ENCODE measurements at regions of chr9 and their contacts with region 1.

Region 1: DNA sequence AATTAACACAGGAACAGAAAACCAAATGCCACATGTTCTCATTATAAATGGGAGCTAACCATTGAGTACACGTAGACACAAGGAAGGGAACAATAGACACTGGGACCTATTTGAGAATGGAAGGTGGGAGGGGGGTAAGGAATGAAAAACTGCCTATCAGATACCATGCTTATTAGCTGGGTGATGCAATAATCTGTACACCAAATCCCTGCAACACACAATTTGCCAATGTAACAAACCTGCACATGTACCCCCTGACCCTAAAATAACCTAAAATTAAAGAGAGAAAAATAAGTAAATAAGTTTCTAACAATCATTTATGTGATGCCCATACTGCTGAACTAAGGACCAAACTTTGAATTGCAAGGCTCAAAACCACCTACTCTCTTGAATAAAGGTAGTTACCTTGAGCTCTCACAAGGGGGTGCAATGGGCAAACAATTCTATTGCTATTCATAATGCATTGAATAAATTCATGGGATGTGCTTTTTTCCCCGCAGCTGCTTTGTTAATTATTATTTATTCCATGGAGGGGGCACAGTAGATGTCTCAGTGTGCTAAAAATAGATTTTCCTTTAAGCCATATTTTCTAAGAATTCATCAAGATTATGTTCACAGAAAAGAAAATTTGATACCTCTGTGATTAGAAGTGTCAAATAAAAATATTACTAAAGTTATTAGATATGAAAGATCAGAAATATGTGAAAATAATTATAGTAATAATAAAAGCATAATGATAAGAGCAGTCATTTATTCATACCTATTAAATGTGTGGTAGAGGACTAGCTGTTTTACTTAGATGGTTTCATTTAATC is 76.2 kb upstream of the PTPN3 start:
- DNase-seq: peak; percentile 19 to 64 (median 55)
- H3K4me3 ChIP-seq: no peak overlapping the region
- H3K27ac ChIP-seq: no peak overlapping the region
- H3K4me1 ChIP-seq: no peaks in the 10 kb centered on the region
- H3K27me3 ChIP-seq: no peaks in the 10 kb centered on the region
- CTCF ChIP-seq: peak; percentile 49 to 81 (median 74)
- POLR2A ChIP-seq: no peak

Region 2: DNA sequence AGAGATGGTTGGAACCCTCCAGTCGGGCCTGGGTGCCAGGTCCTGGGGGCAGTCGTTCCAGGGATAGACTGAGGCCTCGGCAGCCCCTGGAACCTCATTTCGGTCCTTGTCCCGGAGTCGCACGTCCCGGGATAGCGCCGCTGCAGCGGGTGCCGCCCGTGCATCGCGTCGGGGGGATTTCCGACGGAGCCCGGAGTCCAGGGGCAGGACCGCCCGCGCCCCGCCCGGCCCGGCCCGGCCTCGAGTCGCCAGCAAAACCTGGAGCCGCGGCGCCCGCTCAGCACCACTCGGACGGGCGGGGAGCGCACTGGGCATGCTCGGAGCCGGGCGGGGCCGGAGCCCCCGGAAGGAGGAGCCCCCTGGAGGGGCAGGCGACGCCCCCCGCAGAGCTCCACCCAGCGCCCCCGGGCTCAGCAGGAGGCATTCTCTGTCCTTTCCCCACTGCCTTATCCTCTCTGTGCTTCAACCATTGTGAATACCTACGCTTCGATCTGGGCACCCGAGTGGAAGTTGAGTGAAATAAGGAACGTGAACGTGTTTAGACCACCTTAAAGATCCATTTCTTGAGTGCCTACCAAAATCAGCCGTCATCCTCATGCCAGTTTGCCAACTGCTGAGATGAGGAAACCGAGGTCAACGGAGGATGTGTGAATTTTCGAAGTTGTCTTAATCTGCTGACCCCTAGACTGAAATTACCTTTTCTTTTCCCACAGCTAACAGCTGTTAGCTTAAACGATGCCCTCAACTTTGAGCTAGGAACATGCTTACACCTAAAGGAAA is 74.5 kb before region 1 on chr9:
- intact Hi-C with region 1: no loop called
- DNase-seq: peak in 4 of 7 donors; percentile 29 to 46 (median 35)
- H3K4me3 ChIP-seq: peak overlapping the region in 1 of 4 donors; percentile 43
- H3K27ac ChIP-seq: no peak overlapping the region
- H3K4me1 ChIP-seq: peaks cover 0 to 10% of the 10 kb centered on the region in 2 donors
- H3K27me3 ChIP-seq: peaks cover 21% of the 10 kb centered on the region
- CTCF ChIP-seq: no peak
- POLR2A ChIP-seq: no peak

Region 3: DNA sequence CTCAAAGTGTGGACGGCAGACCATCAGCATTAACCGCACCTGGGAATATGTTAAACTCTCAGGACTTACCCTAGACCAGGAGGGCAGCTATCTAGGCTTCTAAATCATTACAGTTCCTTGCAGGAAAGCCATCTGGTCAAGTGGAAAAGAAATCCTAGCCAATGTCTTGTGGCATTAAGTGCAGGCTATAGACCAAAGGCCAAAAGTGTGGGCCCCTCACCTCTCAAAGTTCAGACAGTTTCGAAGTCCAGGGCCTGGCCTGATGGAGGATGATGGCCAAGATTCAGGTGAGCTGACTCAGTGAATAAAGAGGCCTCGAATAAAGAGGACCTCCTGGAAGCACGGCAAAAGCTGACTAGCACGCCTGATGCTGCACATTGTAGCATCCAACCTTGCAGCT is 52.2 kb before region 1 on chr9:
- intact Hi-C with region 1: no loop called
- DNase-seq: no peak
- H3K4me3 ChIP-seq: no peak overlapping the region
- H3K27ac ChIP-seq: no peak overlapping the region
- H3K4me1 ChIP-seq: no peaks in the 10 kb centered on the region
- H3K27me3 ChIP-seq: no peaks in the 10 kb centered on the region
- CTCF ChIP-seq: no peak
- POLR2A ChIP-seq: no peak

Region 4: DNA sequence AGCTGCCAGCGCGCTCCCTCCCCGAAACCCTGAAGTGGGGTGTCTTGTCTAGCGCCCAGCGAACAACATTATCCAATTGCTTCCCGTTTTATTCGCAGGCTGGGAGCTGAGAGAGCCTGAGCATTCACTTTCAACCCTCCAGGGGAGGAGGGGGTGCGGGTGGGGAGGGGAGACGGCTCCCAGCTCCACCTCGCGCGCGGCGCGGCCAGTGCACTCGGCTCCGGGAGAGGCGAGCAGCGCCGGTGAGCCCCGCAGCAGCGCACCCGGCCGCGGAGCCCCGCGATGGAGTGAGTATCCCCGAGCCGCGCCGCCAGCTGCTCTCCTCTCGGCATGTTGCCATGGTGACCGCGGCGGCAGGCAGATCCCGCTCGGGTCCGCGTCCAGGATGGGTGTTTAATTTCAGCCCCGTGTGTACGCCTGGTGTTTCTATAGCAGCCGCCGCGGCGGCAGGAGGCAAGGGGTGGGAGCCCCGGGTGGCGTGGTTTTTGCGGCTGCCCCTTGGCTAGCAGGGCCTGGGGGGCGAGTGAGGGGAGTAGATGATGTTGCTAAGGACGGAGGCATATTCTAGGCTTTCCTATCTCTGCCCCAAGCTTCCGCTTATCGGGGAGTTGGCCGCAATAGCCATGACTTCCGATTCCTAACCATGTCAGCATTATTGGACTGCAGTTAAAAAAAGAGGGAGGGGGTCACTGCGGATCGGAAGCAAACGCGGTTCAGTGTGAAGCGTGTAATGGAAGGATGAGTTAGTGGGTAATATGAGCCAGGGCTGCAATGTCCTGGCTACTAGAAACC is 66.5 kb after region 1 on chr9:
- intact Hi-C with region 1: loop called in 1 of 2 experiments (anchors 10 kb)
- DNase-seq: peak in 6 of 7 donors; percentile 22 to 71 (median 47)
- H3K4me3 ChIP-seq: peak overlapping the region in 1 of 4 donors; percentile 51
- H3K27ac ChIP-seq: peak overlapping the region in 1 of 5 donors; percentile 49
- H3K4me1 ChIP-seq: peaks cover 7 to 19% of the 10 kb centered on the region in 2 donors
- H3K27me3 ChIP-seq: peaks cover 43% of the 10 kb centered on the region
- CTCF ChIP-seq: no peak
- POLR2A ChIP-seq: no peak

Region 5: DNA sequence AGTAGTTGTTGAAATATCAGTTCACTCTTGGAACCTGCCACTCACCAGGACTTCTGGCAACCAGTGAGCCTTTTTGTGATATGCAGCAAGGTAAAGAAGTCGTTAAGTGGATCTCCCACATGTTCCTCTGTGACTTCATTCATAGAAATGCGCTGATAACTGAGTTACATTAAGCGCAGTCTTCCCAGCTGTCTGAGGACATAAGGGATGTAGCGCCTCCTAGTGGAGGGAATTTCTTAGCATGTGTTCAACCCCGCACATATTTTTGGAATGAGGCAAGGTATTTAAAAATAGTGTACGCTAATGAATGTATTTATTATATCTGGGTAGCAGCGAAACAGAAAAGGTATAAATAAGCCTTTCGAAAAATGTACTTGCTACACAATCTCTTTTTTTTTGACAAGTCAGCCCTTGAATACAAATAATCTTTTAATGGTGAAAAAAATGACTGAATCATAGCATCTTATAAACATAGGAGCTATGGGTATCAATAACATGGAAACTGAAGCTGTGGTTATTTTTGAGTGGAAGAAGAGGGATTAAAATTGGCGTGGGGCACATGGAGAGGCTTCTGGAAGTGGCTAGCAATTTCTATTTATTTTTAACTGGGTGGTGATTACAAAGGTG is 243.7 kb after region 1 on chr9:
- intact Hi-C with region 1: loop called (anchors 2 to 5 kb)
- DNase-seq: peak; percentile 75 to 92 (median 83)
- H3K4me3 ChIP-seq: no peak overlapping the region
- H3K27ac ChIP-seq: peak overlapping the region in 3 of 5 donors; percentile 8 to 62 (median 30)
- H3K4me1 ChIP-seq: peaks cover 0 to 6% of the 10 kb centered on the region in 2 donors
- H3K27me3 ChIP-seq: no peaks in the 10 kb centered on the region
- CTCF ChIP-seq: peak; percentile 88 to 95 (median 93)
- POLR2A ChIP-seq: no peak

Region 6: DNA sequence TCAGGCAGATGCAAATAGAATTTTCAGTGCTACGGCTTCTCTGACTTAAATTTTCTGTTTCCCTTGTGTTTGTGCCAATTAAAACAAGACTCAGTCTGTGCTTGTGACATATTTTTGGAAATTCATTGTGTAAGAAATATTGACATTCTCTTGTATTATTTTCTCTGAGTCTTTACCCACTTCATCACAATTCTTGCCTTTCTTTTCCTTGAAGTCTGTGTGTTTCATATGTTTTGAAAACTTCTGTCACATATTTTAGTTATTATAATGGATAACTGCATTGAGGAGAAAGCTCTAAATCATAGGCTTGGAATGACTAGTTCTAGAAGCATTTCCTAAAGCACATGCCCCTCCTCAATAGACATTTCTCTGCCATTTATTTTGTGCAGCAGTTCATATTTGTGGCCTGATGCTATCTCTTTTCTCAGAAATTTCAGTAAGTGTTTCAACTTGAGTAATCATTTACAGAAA is 412.3 kb after region 1 on chr9:
- intact Hi-C with region 1: no loop called
- DNase-seq: no peak
- H3K4me3 ChIP-seq: no peak overlapping the region
- H3K27ac ChIP-seq: peak overlapping the region in 3 of 5 donors; percentile 28 to 57 (median 37)
- H3K4me1 ChIP-seq: peaks cover 4 to 18% of the 10 kb centered on the region in 2 donors
- H3K27me3 ChIP-seq: no peaks in the 10 kb centered on the region
- CTCF ChIP-seq: no peak
- POLR2A ChIP-seq: no peak

Region 7: DNA sequence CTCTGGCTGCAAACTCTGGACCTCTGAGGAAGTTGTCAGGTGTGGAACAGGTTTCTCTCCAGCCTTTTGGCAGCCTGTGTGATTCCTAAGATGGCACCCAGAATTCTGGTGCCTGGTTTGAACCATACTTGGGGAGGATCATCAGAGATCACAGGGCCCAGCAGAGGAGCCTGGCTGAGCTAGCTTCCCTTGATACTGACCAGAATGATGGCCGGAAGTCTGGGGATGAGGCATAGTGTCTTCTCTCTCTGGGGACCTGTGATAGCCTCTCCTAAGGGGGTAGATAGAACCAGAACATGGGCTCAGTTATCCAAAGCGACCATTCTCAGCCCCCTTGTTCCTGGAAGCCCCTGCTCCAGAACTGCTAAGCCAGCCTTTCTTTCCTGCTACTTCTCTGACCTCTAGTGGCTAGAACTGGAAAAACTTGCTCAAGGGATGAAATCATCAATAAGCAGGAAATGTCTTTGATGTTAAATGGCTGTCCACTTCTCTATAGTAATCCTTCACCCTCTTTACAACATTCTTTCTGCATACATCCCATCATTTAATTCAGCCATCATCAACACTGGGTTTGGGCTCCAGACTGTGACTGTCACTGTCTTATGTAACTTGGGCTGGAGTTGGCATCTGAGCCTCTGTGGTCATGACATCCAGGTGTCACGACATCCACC is 578.6 kb after region 1 on chr9:
- intact Hi-C with region 1: loop called in 1 of 2 experiments (anchors 10 kb)
- DNase-seq: no peak
- H3K4me3 ChIP-seq: no peak overlapping the region
- H3K27ac ChIP-seq: no peak overlapping the region
- H3K4me1 ChIP-seq: peaks cover 0 to 12% of the 10 kb centered on the region in 2 donors
- H3K27me3 ChIP-seq: no peaks in the 10 kb centered on the region
- CTCF ChIP-seq: peak; percentile 51 to 82 (median 71)
- POLR2A ChIP-seq: no peak